ENCODE measurements at regions of chr2 and their contacts with region 1.

Region 1: GRCh38 chr2:177148477-177149154 is 64.0 kb upstream of the HNRNPA3 start:
- DNase-seq: peak; percentile 72
- H3K4me3 ChIP-seq: peak overlapping the region; percentile 22 to 48 (median 39)
- H3K27ac ChIP-seq: no peak overlapping the region
- H3K4me1 ChIP-seq: peaks cover 5% of the 10 kb centered on the region
- H3K27me3 ChIP-seq: no peaks in the 10 kb centered on the region
- CTCF ChIP-seq: peak; percentile 92 to 94

Region 2: DNA sequence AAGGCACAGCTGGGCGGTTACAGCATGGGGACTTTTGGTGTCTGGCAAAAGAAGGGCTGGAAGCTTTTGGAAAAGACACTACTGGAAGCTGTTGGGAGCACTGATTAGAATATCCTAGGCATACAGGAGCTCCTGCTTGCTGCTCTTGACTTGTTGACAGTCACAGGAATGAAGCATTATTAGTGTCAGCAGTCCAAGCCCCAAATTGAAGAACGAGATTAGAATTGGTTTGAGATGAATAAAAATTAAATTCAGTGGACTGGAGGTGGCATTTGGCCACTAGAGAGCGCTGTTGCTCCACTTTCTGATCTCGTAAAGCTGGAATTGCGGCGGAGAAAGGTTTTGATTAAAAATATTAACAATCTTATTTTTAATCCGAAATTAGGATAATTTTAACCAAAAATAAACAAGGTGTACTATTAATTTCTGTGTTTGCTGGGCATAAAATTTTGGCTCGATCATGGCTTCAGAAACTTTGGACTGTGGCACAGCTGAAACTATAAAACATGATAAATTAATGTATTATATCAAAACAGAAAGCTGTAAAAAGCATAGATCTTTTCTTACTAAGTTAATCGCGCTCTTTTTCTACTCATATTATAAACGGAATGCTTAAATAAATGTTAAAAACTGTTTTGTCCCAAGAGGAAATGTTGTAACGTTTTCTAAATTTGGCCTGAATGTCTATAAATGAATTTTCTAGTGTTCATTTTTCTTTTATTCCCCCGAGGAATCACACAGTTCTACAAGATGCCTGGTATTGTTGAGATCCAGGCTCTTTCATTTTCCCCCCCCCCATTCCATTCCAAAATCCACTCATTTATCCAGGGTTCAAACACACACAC is 1021.5 kb before region 1 on chr2:
- CTCF ChIA-PET with region 1: no interaction called
- dilution Hi-C with region 1: loop called (anchors 25 kb)
- in situ Hi-C with region 1: loop called (anchors 5 to 10 kb)
- intact Hi-C with region 1: loop called (anchors 1 kb)
- DNase-seq: no peak
- H3K4me3 ChIP-seq: no peak overlapping the region
- H3K27ac ChIP-seq: no peak overlapping the region
- H3K4me1 ChIP-seq: peaks cover 8% of the 10 kb centered on the region
- H3K27me3 ChIP-seq: peaks cover 88% of the 10 kb centered on the region
- CTCF ChIP-seq: peak; percentile 74

Region 3: GRCh38 chr2:176554101-176555048 is 594.2 kb before region 1 on chr2:
- CTCF ChIA-PET with region 1: no interaction called
- dilution Hi-C with region 1: no loop called
- in situ Hi-C with region 1: no loop called
- intact Hi-C with region 1: loop called (anchors 10 kb)
- DNase-seq: peak; percentile 34
- H3K4me3 ChIP-seq: peak overlapping the region; percentile 49 to 54 (median 49)
- H3K27ac ChIP-seq: no peak overlapping the region
- H3K4me1 ChIP-seq: peaks cover 16% of the 10 kb centered on the region
- H3K27me3 ChIP-seq: peaks cover 8% of the 10 kb centered on the region
- CTCF ChIP-seq: peak; percentile 58 to 73

Region 4: DNA sequence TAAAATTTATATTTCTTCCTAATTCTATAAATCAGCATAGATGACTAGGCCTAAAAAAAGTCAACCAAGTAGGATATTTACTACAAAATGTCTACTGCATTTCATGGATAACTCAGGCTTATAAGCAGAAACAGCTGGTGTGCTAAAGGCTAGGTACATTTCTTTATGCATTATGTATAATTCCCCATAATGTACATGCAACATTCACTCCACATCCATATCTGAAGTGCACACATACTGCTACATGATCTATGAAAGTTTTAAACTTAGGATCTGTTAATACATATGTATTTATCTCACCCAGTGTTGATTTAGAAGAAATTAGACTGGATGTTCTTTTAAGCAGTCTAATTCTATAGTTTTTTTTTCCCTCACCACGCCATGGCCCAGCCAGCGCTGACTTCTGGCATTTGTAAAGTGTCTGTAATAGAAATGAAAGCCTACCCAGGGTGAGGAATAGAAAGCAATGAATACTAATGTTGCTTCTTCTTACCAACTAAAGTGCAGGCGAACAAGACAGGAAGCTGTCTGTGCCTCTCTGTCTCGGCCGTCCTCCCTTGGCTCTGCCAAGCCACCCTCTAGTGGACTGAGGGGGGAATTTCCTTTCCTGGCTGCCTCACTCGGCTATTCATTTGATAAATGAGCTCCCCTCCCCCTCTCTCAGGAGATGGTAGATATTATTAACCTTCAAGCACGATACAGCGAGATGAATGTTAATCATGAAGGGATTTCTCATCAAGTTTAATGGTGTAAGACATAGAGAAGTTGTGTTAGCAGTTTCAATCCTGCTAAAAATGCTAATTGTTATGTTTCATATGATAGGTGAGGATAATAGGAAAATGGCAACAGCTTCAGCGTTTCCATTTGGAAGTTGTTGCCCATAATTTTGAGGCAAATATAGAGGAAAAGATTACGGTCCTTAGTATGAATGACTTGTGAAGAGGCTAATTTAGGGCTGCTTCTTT is 494.9 kb before region 1 on chr2:
- CTCF ChIA-PET with region 1: no interaction called
- dilution Hi-C with region 1: no loop called
- in situ Hi-C with region 1: loop called in 1 of 2 experiments (anchors 25 kb)
- intact Hi-C with region 1: loop called (anchors 2 kb)
- DNase-seq: peak; percentile 67
- H3K4me3 ChIP-seq: no peak overlapping the region
- H3K27ac ChIP-seq: no peak overlapping the region
- H3K4me1 ChIP-seq: no peaks in the 10 kb centered on the region
- H3K27me3 ChIP-seq: peaks cover 3% of the 10 kb centered on the region
- CTCF ChIP-seq: peak; percentile 79 to 89

Region 5: GRCh38 chr2:176931588-176932563 is 216.7 kb before region 1 on chr2:
- CTCF ChIA-PET with region 1: no interaction called
- dilution Hi-C with region 1: no loop called
- in situ Hi-C with region 1: no loop called
- intact Hi-C with region 1: loop called (anchors 10 kb)
- DNase-seq: peak; percentile 39
- H3K4me3 ChIP-seq: no peak overlapping the region
- H3K27ac ChIP-seq: no peak overlapping the region
- H3K4me1 ChIP-seq: no peaks in the 10 kb centered on the region
- H3K27me3 ChIP-seq: peaks cover 4% of the 10 kb centered on the region
- CTCF ChIP-seq: peak in 1 of 2 donors; percentile 14

Region 6: GRCh38 chr2:176986487-176986886 is 162.1 kb before region 1 on chr2:
- CTCF ChIA-PET with region 1: no interaction called
- dilution Hi-C with region 1: no loop called
- in situ Hi-C with region 1: no loop called
- intact Hi-C with region 1: no loop called
- DNase-seq: no peak
- H3K4me3 ChIP-seq: no peak overlapping the region
- H3K27ac ChIP-seq: no peak overlapping the region
- H3K4me1 ChIP-seq: no peaks in the 10 kb centered on the region
- H3K27me3 ChIP-seq: peaks cover 4% of the 10 kb centered on the region
- CTCF ChIP-seq: no peak

Region 7: DNA sequence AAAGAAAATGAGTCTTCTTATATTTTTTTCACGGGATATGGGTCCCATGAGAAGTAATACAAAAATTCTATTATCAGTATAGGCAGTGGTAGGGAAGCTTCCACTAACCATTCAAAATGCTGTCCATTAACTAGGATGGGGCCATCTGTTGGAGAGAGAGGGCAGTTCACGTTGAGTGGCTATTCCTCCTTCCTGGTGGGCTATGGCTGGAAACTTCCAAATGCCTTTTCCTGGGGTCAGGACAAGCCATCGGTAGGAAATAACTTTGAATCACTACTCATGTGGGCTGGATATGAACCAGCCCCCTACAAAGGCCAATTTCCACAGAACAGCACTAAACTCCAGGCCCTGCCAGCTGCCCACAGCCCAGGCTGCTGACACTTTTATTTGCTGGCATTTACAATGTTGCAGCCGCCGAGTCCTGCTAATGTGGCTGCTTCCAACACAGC is 92.1 kb before region 1 on chr2:
- CTCF ChIA-PET with region 1: no interaction called
- dilution Hi-C with region 1: no loop called
- in situ Hi-C with region 1: no loop called
- intact Hi-C with region 1: loop called (anchors 5 kb)
- DNase-seq: no peak
- H3K4me3 ChIP-seq: no peak overlapping the region
- H3K27ac ChIP-seq: no peak overlapping the region
- H3K4me1 ChIP-seq: no peaks in the 10 kb centered on the region
- H3K27me3 ChIP-seq: no peaks in the 10 kb centered on the region
- CTCF ChIP-seq: peak in 1 of 2 donors; percentile 1